ENCODE measurements at regions of chr10 and their contacts with region 1.

Region 1: GRCh38 chr10:8365935-8366911 is 311.7 kb downstream of the GATA3 start:
- DNase-seq: peak; percentile 94 to 98
- H3K4me3 ChIP-seq: peak overlapping the region; percentile 34; the same call in 1 of the 2 replicates
- H3K27ac ChIP-seq: peak overlapping the region; percentile 98
- H3K4me1 ChIP-seq: peaks cover 30% of the 10 kb centered on the region
- H3K27me3 ChIP-seq: no peaks in the 10 kb centered on the region
- CTCF ChIP-seq: no peak

Region 2: DNA sequence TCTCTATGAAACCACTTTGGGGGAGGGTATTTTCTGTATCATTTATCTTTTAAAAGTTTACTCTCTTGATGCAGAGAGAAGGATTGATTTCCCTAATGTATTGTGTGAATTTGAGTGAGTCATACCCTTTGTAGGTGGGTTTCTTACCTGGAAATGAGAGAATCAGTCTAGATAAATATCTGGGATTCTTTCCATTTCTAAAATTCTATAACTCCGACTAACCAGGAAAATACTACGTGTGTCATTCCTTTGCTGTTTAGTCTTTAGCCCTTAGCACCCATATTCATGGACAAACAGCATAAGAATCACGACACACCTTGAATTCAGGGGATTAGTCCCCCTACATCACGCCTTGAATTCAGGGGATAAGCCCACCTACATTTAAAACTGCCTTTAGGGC is 172.7 kb before region 1 on chr10:
- CTCF ChIA-PET with region 1: no interaction called
- POLR2A ChIA-PET with region 1: interaction called, 4 read pairs
- intact Hi-C with region 1: loop called (anchors 1 kb)
- DNase-seq: peak; percentile 37 to 93
- H3K4me3 ChIP-seq: peak overlapping the region; percentile 52; the same call in 1 of the 2 replicates
- H3K27ac ChIP-seq: peak overlapping the region; percentile 99
- H3K4me1 ChIP-seq: peaks cover 32% of the 10 kb centered on the region
- H3K27me3 ChIP-seq: no peaks in the 10 kb centered on the region
- CTCF ChIP-seq: no peak

Region 3: GRCh38 chr10:8581536-8582267 is 215.5 kb after region 1 on chr10:
- CTCF ChIA-PET with region 1: no interaction called
- POLR2A ChIA-PET with region 1: no interaction called
- intact Hi-C with region 1: loop called (anchors 1 kb)
- DNase-seq: peak; percentile 67 to 91
- H3K4me3 ChIP-seq: peak overlapping the region; percentile 26; the same call in 1 of the 2 replicates
- H3K27ac ChIP-seq: peak overlapping the region; percentile 92
- H3K4me1 ChIP-seq: peaks cover 34% of the 10 kb centered on the region
- H3K27me3 ChIP-seq: no peaks in the 10 kb centered on the region
- CTCF ChIP-seq: no peak

Region 4: DNA sequence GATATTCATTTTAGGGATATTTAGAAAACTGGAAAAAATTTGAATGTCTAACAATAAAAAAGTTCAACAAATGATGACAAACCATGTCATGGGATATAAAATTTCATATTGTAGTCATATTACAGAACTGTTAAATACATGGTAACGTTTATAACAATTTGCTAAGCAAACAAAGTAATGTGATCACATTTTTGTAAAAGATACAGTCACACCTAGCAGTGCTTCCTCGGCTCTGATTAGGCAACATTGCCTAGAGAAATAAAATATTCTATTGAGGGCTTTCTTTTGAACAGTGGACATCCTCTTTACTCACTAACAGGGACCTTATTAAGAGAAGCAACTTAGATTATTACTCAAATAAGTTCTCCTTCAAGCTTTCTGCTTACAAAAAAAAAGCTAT is 293.8 kb after region 1 on chr10:
- CTCF ChIA-PET with region 1: no interaction called
- POLR2A ChIA-PET with region 1: no interaction called
- intact Hi-C with region 1: no loop called
- DNase-seq: peak in 1 of 2 experiments; percentile 63
- H3K4me3 ChIP-seq: no peak overlapping the region
- H3K27ac ChIP-seq: no peak overlapping the region
- H3K4me1 ChIP-seq: no peaks in the 10 kb centered on the region; the same call in 1 of the 2 replicates
- H3K27me3 ChIP-seq: no peaks in the 10 kb centered on the region
- CTCF ChIP-seq: no peak

Region 5: DNA sequence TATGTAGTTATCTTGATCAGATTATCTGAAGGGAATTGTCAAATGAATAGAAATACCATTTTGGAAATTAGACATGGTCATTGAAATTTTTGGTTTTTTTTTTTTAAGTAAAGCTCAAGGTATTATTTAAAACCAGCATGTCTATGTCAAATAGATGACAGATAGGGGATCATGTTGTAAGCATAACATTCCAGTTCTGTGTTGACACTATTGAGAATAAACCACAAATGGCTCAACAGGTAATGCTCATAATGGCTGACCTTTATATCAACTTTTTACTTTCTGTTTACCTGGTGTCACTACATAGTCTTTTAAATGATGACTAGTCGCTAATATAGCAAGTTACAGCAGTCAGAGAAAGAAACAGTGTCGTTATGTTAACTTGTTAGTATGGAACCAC is 304.2 kb after region 1 on chr10:
- CTCF ChIA-PET with region 1: no interaction called
- POLR2A ChIA-PET with region 1: no interaction called
- intact Hi-C with region 1: loop called (anchors 1 kb)
- DNase-seq: peak in 1 of 2 experiments; percentile 81
- H3K4me3 ChIP-seq: no peak overlapping the region
- H3K27ac ChIP-seq: peak overlapping the region; percentile 67
- H3K4me1 ChIP-seq: peaks cover 12% of the 10 kb centered on the region
- H3K27me3 ChIP-seq: no peaks in the 10 kb centered on the region
- CTCF ChIP-seq: no peak

Region 6: GRCh38 chr10:8873310-8873709 is 507.1 kb after region 1 on chr10:
- CTCF ChIA-PET with region 1: no interaction called
- POLR2A ChIA-PET with region 1: no interaction called
- intact Hi-C with region 1: loop called (anchors 1 kb)
- DNase-seq: peak in 1 of 2 experiments; percentile 51
- H3K4me3 ChIP-seq: no peak overlapping the region
- H3K27ac ChIP-seq: peak overlapping the region; percentile 48
- H3K4me1 ChIP-seq: peaks cover 20% of the 10 kb centered on the region
- H3K27me3 ChIP-seq: no peaks in the 10 kb centered on the region
- CTCF ChIP-seq: peak; percentile 53; the same call in 1 of the 2 replicates

Measured in PC-9 (cell line).